Common myeloid progenitor, CD34-positive (primary cell): ENCODE measurements at regions of chr10 and their contacts with region 1.

Region 1: GRCh38 chr10:97081621-97082235 is 104.0 kb downstream of the SLIT1 start:
- DNase-seq: peak; percentile 54 to 81 (median 74)
- H3K4me3 ChIP-seq: no peak overlapping the region
- H3K27ac ChIP-seq: no peak overlapping the region
- H3K4me1 ChIP-seq: no peaks in the 10 kb centered on the region
- H3K27me3 ChIP-seq: peaks cover 0 to 50% (median 15%) of the 10 kb centered on the region in 5 experiments

Region 2: DNA sequence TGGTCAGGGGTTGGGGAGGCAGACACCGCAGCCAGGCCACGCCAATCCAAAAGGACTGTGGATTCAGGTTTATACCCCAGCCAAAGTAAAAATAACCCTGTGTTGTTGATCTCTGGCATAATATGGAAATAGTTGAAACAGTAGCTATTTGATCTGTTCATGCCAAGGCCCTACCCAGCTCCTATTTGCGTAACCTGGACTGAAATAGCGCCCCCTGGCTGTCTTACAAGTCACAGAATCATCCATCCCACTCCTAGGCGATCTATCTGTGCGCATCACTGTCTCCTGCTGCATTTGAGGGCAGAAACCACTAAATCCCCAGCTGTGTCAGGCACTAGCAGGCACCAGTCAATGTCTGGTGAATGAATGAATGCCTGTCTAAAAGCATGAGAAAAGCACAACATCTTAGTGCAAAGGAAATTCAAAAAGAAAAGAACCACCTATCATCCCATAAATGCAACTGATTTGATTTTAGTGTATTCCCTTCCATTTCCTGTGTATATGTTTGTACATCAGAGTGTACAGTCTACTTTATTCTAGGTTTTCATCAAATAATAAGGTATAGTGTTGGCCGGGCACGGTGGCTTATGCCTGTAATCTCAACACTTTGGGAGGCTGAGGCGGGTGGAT is 56.0 kb before region 1 on chr10:
- CTCF ChIA-PET with region 1: no interaction called
- POLR2A ChIA-PET with region 1: no interaction called
- DNase-seq: peak; percentile 74 to 86 (median 82)
- H3K4me3 ChIP-seq: no peak overlapping the region
- H3K27ac ChIP-seq: no peak overlapping the region
- H3K4me1 ChIP-seq: peaks cover 0 to 14% (median 12%) of the 10 kb centered on the region in 4 experiments
- H3K27me3 ChIP-seq: no peaks in the 10 kb centered on the region

Region 3: DNA sequence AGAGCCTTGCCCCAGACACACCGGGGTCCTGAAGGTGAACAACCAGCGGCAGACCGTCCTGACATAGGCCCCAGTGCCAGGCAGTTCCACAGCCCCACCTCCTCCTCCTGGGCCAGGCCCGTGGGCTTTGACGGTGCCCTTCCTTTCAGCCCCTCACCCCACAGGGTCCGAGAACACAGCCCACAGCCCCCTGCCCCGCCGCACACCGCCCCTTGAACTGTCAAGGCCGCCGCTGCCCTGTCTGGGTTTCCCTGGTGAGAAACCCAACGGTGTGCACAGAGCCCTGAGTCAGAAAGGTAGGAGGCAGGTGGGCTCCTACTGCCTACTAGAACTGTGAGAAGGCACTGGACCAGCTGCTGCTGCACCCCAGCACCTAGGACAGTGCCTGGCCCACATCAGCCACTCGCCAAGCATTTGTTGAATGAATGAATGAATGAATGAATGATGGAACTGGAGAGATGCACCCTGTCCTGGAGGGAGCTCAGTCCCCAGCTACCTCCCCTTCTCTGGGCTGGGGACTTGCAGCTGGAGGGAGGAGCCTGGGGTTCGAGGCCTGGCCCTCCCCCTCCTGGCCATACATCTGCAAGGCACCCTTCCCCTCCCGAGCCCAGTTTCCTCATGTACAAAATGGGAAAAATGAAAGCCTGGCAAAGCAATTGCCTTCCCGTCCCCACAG is 13.9 kb before region 1 on chr10:
- CTCF ChIA-PET with region 1: interaction called, 19 read pairs
- POLR2A ChIA-PET with region 1: no interaction called
- DNase-seq: peak in 2 of 3 donors; percentile 4 to 6
- H3K4me3 ChIP-seq: no peak overlapping the region
- H3K27ac ChIP-seq: no peak overlapping the region
- H3K4me1 ChIP-seq: peaks cover 0 to 6% (median 1%) of the 10 kb centered on the region in 4 experiments
- H3K27me3 ChIP-seq: peaks cover 0 to 8% (median 2%) of the 10 kb centered on the region in 5 experiments

Region 4: GRCh38 chr10:97179731-97180362 is 98.1 kb after region 1 on chr10:
- CTCF ChIA-PET with region 1: interaction called, 44 read pairs
- POLR2A ChIA-PET with region 1: no interaction called
- DNase-seq: peak; percentile 26 to 52 (median 39)
- H3K4me3 ChIP-seq: no peak overlapping the region
- H3K27ac ChIP-seq: no peak overlapping the region
- H3K4me1 ChIP-seq: peaks cover 0 to 1% (median under 1%) of the 10 kb centered on the region in 4 experiments
- H3K27me3 ChIP-seq: peaks cover 4 to 78% (median 41%) of the 10 kb centered on the region in 5 experiments

Region 5: DNA sequence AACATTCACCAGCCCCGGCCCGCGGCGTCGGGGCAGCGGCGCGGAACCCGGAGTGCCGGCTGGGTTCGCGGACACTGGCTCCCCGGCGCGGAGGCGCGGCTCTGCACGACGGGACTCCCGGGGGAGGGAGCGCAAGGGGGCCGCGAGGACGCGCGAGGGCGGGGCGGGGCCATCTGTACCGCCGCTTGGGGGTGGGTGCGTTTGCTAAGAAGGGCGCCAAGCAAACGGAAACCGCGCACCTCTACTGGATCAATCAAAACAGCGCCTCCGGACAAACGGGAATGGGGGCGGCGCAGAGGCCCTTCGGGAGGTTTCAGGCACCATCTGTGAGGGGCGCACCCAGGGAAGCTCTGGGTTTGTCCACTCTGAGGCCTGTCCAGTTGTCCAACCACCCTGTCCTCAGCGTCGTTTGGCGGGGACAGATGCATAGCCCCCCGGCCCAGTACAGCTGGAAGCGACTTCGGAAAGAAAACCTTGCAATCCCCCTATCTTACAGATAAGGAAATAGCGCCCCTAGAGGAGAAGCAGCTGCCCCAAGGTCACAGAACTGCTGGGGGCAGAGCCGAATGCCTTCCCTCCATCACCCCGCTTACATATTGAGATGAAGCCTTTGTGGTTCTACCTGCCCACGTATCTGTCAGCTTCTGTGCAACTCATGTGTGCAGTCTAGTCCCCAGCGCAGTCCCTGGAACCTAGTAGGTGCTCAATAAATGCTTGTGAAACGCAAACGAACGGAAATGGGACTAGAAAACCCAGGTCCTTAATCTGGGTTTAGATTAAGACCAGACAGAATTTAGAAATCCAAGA is 114.7 kb after region 1 on chr10:
- CTCF ChIA-PET with region 1: interaction called, 37 read pairs
- POLR2A ChIA-PET with region 1: no interaction called
- DNase-seq: peak; percentile 63 to 84 (median 83)
- H3K4me3 ChIP-seq: peak overlapping the region in 6 of 7 experiments; percentile 46 to 78 (median 58)
- H3K27ac ChIP-seq: no peak overlapping the region
- H3K4me1 ChIP-seq: peaks cover 0 to 24% (median 15%) of the 10 kb centered on the region in 4 experiments
- H3K27me3 ChIP-seq: peaks cover 0 to 69% (median 26%) of the 10 kb centered on the region in 5 experiments